ENCODE measurements at regions of chrX and their contacts with region 1.

Region 1: DNA sequence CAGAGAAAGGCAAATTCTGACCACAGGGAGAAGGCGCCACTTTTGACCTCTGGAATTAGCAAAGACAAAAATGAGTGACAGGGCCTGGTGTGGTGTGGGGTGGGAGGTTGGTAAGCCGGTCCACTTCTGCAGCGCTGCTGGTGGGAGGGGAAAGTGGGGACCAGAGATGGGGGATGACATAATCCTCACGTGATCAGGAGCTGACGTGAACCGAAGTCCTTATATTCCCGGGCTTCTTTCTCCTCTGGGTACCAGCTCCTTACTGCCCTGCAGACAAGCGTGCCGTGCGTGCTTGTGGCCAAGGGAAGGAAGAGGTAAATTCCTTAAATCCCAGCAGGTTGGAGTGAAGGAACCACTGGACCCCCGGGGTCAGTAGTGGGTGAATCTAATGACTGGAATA is at the start of gene TCEAL7:
- DNase-seq: peak; percentile 79
- H3K4me3 ChIP-seq: peak within 1 kb of the TSS; percentile 23 to 47 (median 44)
- H3K27ac ChIP-seq: peak within 1 kb of the TSS; percentile 12 to 63 (median 56)
- H3K4me1 ChIP-seq: peaks cover 0 to 5% (median 0%) of the 10 kb centered on the region in 4 donors
- H3K27me3 ChIP-seq: peaks cover 0 to 2% (median 0%) of the 10 kb centered on the region in 3 donors
- CTCF ChIP-seq: no peak
- EP300 ChIP-seq: no peak
- POLR2A ChIP-seq: peak in 1 of 2 donors; percentile 25
- total RNA-seq, gene TCEAL7: 19.7 to 35.2 (median 32.4) TPM

Region 2: GRCh38 chrX:103254921-103255493 is 75.0 kb before region 1 on chrX and contains the start of gene TCEAL8:
- intact Hi-C with region 1: loop called (anchors 5 kb)
- DNase-seq: peak; percentile 93
- H3K4me3 ChIP-seq: peak within 1 kb of the TSS; percentile 45 to 66 (median 59)
- H3K27ac ChIP-seq: peak within 1 kb of the TSS; percentile 79 to 89 (median 86)
- H3K4me1 ChIP-seq: no peaks in the 10 kb centered on the region
- H3K27me3 ChIP-seq: no peaks in the 10 kb centered on the region
- CTCF ChIP-seq: no peak
- EP300 ChIP-seq: no peak
- POLR2A ChIP-seq: peak; percentile 70 to 71
- total RNA-seq, gene TCEAL8: 69.1 to 94.1 (median 85.8) TPM

Measured in sigmoid colon (tissue), 7 donors.